K562 (cell line): ENCODE measurements at regions of chr1 and their contacts with region 1.

Region 1: DNA sequence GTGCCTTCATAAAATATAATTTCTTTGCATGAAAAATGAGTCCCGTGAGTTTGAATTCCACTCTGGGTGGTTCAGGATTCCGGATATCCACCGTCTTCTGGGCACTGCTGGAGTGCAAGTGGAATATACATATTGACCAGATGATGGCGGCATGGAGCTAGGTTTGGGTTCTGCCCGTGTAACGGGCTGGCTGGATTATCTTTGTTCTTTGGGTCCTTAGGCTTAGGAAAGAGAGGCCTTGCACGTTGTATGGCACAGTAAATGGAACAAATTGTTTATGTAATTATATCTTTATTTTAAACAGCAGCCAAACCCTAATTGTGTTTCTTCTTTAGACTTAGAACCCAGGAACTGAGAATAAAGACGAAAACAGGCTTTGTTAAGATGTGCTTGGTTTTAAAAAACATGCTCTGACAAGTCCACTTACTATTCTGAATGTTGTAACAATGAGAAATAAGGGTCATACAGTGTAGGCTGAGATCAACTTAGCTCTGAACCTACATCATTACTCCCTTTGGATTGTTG is 13.5 kb upstream of the ACBD6 start:
- DNase-seq: peak; percentile 82 to 95 (median 86)
- ATAC-seq: peak; percentile 98
- H3K4me3 ChIP-seq: no peak overlapping the region
- H3K27ac ChIP-seq: peak overlapping the region; percentile 10; the same call in 1 of the 3 replicates
- H3K4me1 ChIP-seq: peaks cover 3 to 9% of the 10 kb centered on the region in 2 experiments; a peak in 3 of 5 replicates
- H3K27me3 ChIP-seq: no peaks in the 10 kb centered on the region
- CTCF ChIP-seq: peak; percentile 93 to 97 (median 94)
- EP300 ChIP-seq: peak; percentile 32; the same call in 1 of the 2 replicates
- POLR2A ChIP-seq: no peak
- RAD21 ChIP-seq: peak; percentile 98 to 99

Region 2: DNA sequence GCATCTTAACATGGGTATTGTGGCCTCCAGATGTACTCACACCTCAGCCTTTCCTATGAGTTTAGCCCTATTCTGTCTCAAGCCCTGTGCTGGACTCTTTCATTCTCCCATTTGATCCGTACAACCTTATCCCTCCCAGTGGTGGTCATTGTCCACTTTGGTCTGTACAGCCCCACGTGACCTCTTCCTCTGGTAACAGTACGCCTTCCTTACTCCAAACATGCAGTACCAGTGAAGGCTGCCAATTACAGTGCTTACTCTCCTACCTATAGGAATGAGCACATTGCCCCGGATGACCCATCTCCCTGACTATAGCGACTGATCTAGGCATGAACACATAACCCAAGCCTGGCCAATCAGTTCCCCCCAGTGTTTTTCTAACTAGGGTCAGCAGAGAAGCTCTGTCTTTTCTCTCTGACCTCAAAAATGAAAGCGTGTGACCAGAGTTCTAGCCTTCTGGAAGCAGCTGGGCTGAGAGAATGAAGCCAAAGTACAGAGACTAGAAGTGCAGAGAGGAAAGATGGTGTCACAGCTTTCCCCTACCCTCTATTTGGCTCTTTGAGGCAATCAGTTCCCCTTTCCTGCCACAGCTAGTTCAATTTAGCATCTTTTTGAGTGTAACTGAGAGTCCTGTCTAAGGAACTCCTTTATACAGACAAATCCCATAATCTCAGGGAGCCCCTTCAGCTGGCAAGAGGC is 371.1 kb before region 1 on chr1:
- CTCF ChIA-PET with region 1: no interaction called
- POLR2A ChIA-PET with region 1: no interaction called
- in situ Hi-C with region 1: no loop called
- intact Hi-C with region 1: no loop called
- DNase-seq: no peak
- ATAC-seq: peak; percentile 60
- H3K4me3 ChIP-seq: no peak overlapping the region
- H3K27ac ChIP-seq: no peak overlapping the region
- H3K4me1 ChIP-seq: no peaks in the 10 kb centered on the region
- H3K27me3 ChIP-seq: no peaks in the 10 kb centered on the region
- CTCF ChIP-seq: no peak
- EP300 ChIP-seq: no peak
- POLR2A ChIP-seq: no peak
- RAD21 ChIP-seq: no peak

Region 3: DNA sequence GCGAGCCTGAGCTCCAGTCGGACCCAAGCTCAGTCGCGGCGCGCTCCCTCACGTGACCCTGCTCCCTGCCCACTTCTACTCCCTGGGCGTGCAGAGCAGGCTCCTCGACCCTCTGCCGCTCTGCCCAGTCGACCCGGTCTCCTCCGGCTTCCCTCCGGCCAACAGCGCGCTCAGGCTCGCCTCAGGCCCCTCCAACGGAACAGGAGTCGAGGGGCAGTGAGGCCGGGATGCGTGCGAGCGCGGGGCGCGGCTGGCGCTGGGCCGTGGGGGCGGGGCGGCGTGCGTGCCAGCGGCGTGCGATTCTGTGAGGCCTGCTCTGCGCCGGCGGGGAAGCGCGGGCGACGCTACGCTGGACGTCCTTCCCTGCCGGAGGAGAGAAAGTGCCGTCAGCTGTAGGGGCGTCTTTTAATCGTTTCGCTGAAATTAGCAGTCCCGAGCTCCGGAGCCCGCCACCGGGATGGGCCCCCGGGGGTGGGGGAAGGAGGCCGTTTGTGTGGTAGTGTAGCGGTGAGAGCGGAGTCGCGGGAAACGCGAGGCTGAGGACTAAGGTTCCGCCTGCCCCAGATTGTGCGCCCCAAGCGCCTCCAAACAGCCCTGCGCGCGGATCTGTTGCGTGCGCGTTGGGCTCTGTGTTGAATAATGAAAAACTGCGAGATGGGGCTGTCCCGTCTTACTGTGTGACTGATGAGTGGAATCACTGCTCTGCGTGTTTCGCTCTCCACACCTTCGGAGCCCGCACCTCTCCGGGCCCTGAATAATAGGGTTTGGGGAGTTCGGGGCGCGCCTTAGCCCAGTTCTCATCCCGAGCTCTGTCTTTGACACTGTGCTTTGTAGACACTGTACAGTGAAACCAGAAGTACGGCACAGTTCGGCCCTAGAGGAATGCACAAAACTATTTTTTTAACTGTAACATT is 13.3 kb before region 1 on chr1 and contains the start of gene ACBD6:
- CTCF ChIA-PET with region 1: interaction called, 3 read pairs
- POLR2A ChIA-PET with region 1: interaction called, 15 read pairs
- in situ Hi-C with region 1: no loop called
- intact Hi-C with region 1: no loop called
- DNase-seq: peak; percentile 86 to 95 (median 90)
- ATAC-seq: peak; percentile 93
- H3K4me3 ChIP-seq: peak within 1 kb of the TSS; percentile 57
- H3K27ac ChIP-seq: peak within 1 kb of the TSS; percentile 85
- H3K4me1 ChIP-seq: peaks cover 10 to 19% of the 10 kb centered on the region in 2 experiments; a peak in 4 of 5 replicates
- H3K27me3 ChIP-seq: no peaks in the 10 kb centered on the region
- CTCF ChIP-seq: peak; percentile 36 to 40 (median 39); a peak in 4 of 6 replicates
- EP300 ChIP-seq: peak; percentile 70
- POLR2A ChIP-seq: peak; percentile 95
- RAD21 ChIP-seq: 0 out of 4 replicates have a peak, but pooled peaks of 1 of the 2 experiments have one; percentile 9
- polyA plus RNA-seq, gene ACBD6: 16.9 to 27.1 TPM

Region 4: DNA sequence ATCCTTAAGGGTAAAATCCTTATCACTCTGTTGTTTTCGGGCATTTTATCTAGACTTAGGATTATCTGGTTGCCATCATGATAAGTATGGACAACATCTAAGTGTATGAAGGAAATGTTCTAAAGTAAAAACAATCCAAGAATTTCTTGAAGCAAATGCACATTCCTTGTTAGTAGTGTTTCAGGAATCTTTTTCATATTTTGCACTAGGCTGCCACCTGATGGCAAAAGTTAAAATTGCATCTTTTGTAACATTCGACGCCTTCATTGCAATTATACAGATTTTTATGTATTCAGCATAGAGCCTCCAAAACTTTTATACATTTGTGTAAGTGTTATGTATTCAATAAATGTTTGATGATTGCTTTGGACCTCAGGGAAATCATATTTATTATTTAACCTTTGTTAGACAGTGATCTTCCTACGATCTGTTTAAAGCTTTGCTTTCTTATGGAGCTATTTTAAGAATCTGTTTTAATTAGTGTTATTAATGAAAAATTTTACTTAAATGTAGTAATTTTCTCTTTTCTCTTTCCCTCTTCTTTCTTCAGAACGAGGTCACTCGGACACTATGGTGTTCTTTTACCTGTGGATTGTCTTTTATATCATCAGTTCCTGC is 347.3 kb after region 1 on chr1:
- CTCF ChIA-PET with region 1: interaction called, 69 read pairs
- POLR2A ChIA-PET with region 1: interaction called, 19 read pairs
- in situ Hi-C with region 1: no loop called
- intact Hi-C with region 1: loop called (anchors 5 kb)
- DNase-seq: peak; percentile 30 to 74 (median 41)
- ATAC-seq: peak; percentile 80
- H3K4me3 ChIP-seq: no peak overlapping the region
- H3K27ac ChIP-seq: no peak overlapping the region
- H3K4me1 ChIP-seq: no peaks in the 10 kb centered on the region; a peak in 1 of 5 replicates
- H3K27me3 ChIP-seq: no peaks in the 10 kb centered on the region
- CTCF ChIP-seq: peak; percentile 55 to 94 (median 60); a peak in 5 of 6 replicates
- EP300 ChIP-seq: no peak
- POLR2A ChIP-seq: no peak
- RAD21 ChIP-seq: peak; percentile 98 to 99

Region 5: DNA sequence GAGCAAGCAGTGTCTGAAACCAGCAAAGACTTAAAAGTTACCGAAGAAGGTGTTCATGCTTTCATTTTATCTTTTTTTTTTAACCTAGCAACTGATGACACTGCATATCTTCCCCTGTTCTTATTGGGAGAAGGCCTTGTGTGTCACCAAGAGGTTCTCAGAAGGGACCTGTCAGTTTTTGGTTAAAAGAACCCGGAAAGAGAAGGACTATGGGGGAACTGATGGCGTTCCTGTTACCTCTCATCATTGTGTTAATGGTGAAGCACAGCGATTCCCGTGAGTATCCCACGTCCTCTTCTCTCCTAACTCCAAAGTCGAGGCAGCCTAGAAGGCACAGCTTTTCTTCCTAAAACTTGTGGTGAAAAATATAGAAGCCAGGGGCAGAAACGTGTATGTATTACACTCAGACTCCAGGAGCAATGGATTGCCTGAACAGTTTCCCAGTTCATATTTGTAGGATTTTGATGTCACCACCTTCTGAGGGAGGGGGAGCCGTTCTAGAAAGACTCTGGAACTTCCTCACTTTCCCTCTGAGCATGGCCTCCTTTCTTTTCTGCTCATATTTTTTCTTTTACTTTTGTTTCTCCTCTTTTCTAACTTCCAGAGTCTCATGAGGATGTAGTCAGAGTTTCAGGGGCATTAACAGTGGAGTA is 518.0 kb after region 1 on chr1 and contains the start of gene MR1:
- CTCF ChIA-PET with region 1: no interaction called
- POLR2A ChIA-PET with region 1: no interaction called
- in situ Hi-C with region 1: no loop called
- intact Hi-C with region 1: loop called (anchors 2 kb)
- DNase-seq: peak; percentile 87 to 91 (median 89)
- ATAC-seq: peak; percentile 93
- H3K4me3 ChIP-seq: peak within 1 kb of the TSS; percentile 42
- H3K27ac ChIP-seq: peak within 1 kb of the TSS; percentile 74
- H3K4me1 ChIP-seq: peaks cover 9 to 36% of the 10 kb centered on the region in 2 experiments; a peak in 4 of 5 replicates
- H3K27me3 ChIP-seq: no peaks in the 10 kb centered on the region
- CTCF ChIP-seq: no peak
- EP300 ChIP-seq: no peak
- POLR2A ChIP-seq: peak; percentile 84
- RAD21 ChIP-seq: no peak
- polyA plus RNA-seq, gene MR1: 15.6 to 19.8 TPM

Region 6: DNA sequence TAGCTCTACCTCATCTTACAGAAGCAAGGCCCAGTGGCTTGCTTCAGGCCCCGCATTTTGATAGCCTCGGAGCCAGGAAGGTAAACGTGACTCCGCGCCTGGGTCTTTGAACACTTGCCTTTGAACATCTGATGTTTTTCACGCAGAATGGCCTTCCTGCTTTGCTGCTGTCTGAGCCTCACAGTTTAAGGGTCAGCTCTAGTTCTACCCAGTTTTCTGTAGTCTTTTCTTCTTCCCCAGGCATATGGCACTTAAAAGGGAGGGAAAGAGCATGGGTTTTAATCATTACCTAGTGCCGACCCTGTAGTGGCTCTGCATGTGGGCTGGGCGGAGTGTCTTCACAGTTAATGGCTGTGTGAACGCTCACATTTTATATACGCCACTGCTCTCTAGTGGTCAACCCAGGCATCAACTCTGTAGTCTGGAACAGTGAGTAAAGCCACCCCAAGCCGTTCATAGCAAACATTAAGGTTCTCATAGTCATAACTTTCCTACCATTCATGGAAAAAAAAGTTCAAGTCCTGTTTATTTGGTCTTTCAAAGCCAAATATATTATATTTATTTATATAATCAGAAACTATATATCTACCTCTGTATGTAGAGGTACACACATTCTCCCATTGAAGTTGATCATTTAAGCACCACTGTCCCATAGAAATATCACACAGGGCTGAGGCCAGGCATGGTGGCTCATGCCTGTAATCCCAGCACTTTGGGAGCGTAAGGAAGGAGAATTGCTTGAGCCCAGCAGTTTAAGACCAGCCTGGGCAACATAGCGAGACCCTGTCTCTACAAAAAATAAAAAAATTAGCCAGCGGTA is 650.7 kb after region 1 on chr1:
- CTCF ChIA-PET with region 1: interaction called, 8 read pairs
- POLR2A ChIA-PET with region 1: interaction called, 3 read pairs
- in situ Hi-C with region 1: no loop called
- intact Hi-C with region 1: loop called (anchors 2 kb)
- DNase-seq: peak; percentile 82 to 90 (median 84)
- ATAC-seq: peak; percentile 100
- H3K4me3 ChIP-seq: no peak overlapping the region
- H3K27ac ChIP-seq: no peak overlapping the region; the same call in 2 of the 3 replicates
- H3K4me1 ChIP-seq: no peaks in the 10 kb centered on the region; a peak in 1 of 5 replicates
- H3K27me3 ChIP-seq: no peaks in the 10 kb centered on the region
- CTCF ChIP-seq: peak; percentile 89 to 97 (median 94)
- EP300 ChIP-seq: no peak; the same call in 1 of the 2 replicates
- POLR2A ChIP-seq: no peak
- RAD21 ChIP-seq: peak; percentile 96 to 99